GM10248 (cell line): ENCODE measurements at regions of chr1 and their contacts with region 1.

Region 1: DNA sequence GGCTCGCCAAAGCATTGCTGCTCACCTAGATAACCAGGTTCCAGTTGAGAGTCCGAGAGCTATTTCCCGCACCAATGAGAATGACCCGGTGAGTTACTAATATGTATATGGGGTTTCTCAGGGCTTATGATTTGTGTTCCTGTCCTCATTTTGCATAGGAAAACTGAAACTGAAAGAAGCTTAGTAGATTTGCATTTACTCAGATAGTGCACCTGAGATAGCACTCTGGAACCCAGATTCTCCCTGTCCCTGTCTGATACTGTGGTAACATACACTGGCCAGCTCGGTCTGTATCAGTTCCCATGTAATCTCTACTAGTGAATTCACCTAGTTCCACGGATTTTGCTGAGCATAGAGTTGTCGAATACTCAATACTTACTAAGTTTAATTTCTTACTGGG is 28.1 kb downstream of the DAP3 start:
- DNase-seq: peak; percentile 51
- CTCF ChIP-seq: no peak

Region 2: GRCh38 chr1:155706091-155706619 is 10.9 kb before region 1 on chr1:
- CTCF ChIA-PET with region 1: interaction called, 11 read pairs
- POLR2A ChIA-PET with region 1: interaction called, 5 read pairs
- DNase-seq: no peak
- CTCF ChIP-seq: no peak

Region 3: DNA sequence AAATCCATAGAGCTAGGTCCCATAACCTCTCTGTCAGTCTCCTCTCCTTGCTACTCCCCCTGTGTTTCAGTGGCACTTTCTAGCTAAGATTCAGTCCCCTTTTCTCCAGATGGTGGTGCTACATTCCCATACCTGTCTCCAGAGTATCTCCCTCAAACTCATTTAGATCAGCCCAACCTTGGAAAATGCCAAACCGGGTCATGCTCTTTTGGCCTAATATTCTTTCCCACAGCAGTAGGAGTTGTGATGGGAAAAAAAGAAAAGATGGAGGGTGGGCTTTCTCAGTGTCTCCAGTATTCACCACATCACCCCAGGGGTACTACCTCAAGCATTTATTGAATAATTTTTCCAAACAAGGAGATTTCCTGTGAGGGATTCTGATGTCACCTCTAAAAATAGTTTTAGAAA is 221.2 kb after region 1 on chr1:
- CTCF ChIA-PET with region 1: no interaction called
- POLR2A ChIA-PET with region 1: no interaction called
- DNase-seq: peak; percentile 67
- CTCF ChIP-seq: peak; percentile 85